ENCODE measurements at regions of chr16 and their contacts with region 1.

Region 1: GRCh38 chr16:28823872-28824716 is 1.3 kb downstream of the ATXN2L start:
- DNase-seq: peak; percentile 98
- ATAC-seq: peak; percentile 97

Region 2: GRCh38 chr16:28574925-28575324 is 249.2 kb before region 1 on chr16:
- intact Hi-C with region 1: no loop called
- DNase-seq: no peak
- ATAC-seq: no peak

Region 3: GRCh38 chr16:28950648-28951409 is 126.7 kb after region 1 on chr16 and contains the start of gene NFATC2IP:
- intact Hi-C with region 1: loop called (anchors 10 kb)
- DNase-seq: peak; percentile 100
- ATAC-seq: peak; percentile 99
- total RNA-seq, gene NFATC2IP: 34.5 TPM